ENCODE measurements at regions of chr19 and their contacts with region 1.

Region 1: DNA sequence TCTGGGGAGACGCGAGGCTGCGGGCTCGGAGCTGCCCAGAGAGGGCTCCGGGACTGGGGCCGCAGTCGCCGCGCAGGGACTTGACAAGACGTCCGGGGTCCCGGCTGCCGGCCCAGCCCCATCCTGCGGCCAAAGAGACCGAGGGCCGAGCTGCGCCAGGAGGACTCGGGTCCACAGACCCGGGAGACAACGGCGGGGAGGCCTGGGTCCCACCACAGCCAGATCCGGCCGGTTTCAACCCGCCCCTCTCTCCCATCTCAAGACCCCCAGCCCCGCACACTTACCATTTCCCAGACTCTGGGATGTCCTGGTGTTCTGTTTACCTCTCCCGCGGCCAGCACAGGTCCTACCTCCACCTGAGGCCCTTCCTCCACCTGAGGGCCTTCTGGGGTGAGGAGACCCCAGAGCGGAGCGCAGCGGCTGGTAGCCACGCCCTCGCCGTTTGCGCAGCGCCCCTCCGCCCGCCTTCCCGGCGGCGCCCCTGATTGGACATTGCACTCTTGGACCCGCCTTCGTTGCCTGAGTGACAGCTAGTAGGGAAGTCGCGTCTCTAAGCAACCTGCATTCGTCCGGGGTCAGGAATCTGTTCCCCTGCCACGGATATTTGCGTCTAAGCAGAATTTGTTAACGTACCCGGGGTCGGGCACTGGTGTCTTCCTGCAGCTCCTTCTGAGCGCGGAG is at the start of gene ZNF709:
- DNase-seq: peak; percentile 93
- ATAC-seq: peak; percentile 96
- H3K4me3 ChIP-seq: peak within 1 kb of the TSS; percentile 81 to 98 (median 92)
- H3K4me3 Mint-ChIP-seq: peak within 1 kb of the TSS; percentile 91
- H3K27ac ChIP-seq: peak within 1 kb of the TSS; percentile 69 to 84
- H3K27ac Mint-ChIP-seq: peak within 1 kb of the TSS; percentile 89
- H3K4me1 ChIP-seq: peaks cover 30 to 39% of the 10 kb centered on the region in 2 donors
- H3K4me1 Mint-ChIP-seq: peaks cover 34% of the 10 kb centered on the region
- H3K27me3 ChIP-seq: no peaks in the 10 kb centered on the region
- H3K27me3 Mint-ChIP-seq: no peaks in the 10 kb centered on the region
- CTCF ChIP-seq: no peak
- total RNA-seq, gene ZNF709: 8.4 and 9.3 TPM in 2 replicates

Region 2: GRCh38 chr19:12294249-12295158 is 190.0 kb before region 1 on chr19 and contains the start of gene ZNF44:
- CTCF ChIA-PET with region 1: no interaction called
- POLR2A ChIA-PET with region 1: no interaction called
- intact Hi-C with region 1: loop called (anchors 2 kb)
- DNase-seq: peak; percentile 95
- ATAC-seq: peak; percentile 96
- H3K4me3 ChIP-seq: peak within 1 kb of the TSS; percentile 57 to 96 (median 91)
- H3K4me3 Mint-ChIP-seq: peak within 1 kb of the TSS; percentile 99
- H3K27ac ChIP-seq: peak within 1 kb of the TSS; percentile 82 to 89
- H3K27ac Mint-ChIP-seq: peak within 1 kb of the TSS; percentile 94
- H3K4me1 ChIP-seq: peaks cover 8 to 17% of the 10 kb centered on the region in 2 donors
- H3K4me1 Mint-ChIP-seq: peaks cover 31% of the 10 kb centered on the region
- H3K27me3 ChIP-seq: no peaks in the 10 kb centered on the region
- H3K27me3 Mint-ChIP-seq: no peaks in the 10 kb centered on the region
- CTCF ChIP-seq: no peak
- total RNA-seq, gene ZNF44: 27.8 and 28.0 TPM in 2 replicates

Region 3: DNA sequence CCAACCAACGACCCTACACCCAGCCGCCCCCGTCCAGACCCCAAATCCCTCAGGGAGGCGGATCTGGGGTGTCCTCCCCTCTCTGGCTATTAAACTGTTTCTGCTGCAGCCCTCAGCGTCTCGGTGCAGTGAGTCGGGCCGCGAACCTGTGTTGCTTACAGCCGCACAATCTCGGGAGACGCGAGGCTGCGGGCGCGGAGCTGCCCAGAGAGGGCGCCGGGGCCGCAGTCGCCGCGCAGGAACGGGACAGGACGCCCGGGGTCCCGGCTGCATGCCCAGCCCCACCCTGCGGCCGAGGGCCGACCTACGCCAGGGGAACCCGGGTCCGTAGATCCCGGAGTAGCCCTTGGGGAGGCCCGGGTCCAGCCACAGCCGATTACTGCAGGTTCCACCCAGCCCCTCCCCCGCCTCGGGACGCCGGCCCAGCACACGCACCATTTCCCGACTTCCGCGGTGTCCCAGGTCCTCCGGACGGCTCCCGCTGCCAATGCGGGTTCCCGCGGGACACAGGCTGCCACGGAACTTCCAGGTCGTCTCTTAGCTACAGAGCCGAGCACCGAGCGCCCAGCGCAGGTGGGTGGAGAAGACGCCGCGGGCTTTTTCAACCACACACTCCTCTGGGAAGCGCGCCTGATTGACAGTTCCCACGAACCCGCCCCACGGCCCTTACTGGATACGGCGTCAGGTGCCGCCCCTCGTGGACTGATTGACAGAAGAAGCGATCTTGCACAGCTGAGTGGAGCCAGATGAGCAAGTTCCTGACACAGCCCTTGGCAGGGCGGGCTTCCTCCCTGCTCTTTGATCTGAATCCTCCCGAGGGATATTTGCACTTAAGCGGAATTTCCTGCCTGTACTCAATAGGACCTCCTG is 83.6 kb before region 1 on chr19 and contains the start of gene ZNF799:
- CTCF ChIA-PET with region 1: no interaction called
- POLR2A ChIA-PET with region 1: no interaction called
- intact Hi-C with region 1: loop called (anchors 1 kb)
- DNase-seq: peak; percentile 89
- ATAC-seq: peak; percentile 91
- H3K4me3 ChIP-seq: peak within 1 kb of the TSS; percentile 61 to 93 (median 90)
- H3K4me3 Mint-ChIP-seq: peak within 1 kb of the TSS; percentile 91
- H3K27ac ChIP-seq: peak within 1 kb of the TSS in 1 of 2 donors; percentile 68
- H3K27ac Mint-ChIP-seq: peak within 1 kb of the TSS; percentile 85
- H3K4me1 ChIP-seq: peaks cover 4 to 7% of the 10 kb centered on the region in 2 donors
- H3K4me1 Mint-ChIP-seq: peaks cover 20% of the 10 kb centered on the region
- H3K27me3 ChIP-seq: no peaks in the 10 kb centered on the region
- H3K27me3 Mint-ChIP-seq: no peaks in the 10 kb centered on the region
- CTCF ChIP-seq: no peak
- total RNA-seq, gene ZNF799: 10.5 and 11.1 TPM in 2 replicates

Region 4: GRCh38 chr19:12495002-12495802 is 10.7 kb after region 1 on chr19:
- CTCF ChIA-PET with region 1: interaction called, 6 read pairs
- POLR2A ChIA-PET with region 1: interaction called, 9 read pairs
- intact Hi-C with region 1: loop called (anchors 1 kb)
- DNase-seq: peak; percentile 95
- ATAC-seq: peak; percentile 99
- H3K4me3 ChIP-seq: peak overlapping the region; percentile 68 to 84 (median 76)
- H3K4me3 Mint-ChIP-seq: peak overlapping the region; percentile 92
- H3K27ac ChIP-seq: peak overlapping the region; percentile 82 to 84
- H3K27ac Mint-ChIP-seq: peak overlapping the region; percentile 86
- H3K4me1 ChIP-seq: peaks cover 7 to 11% of the 10 kb centered on the region in 2 donors
- H3K4me1 Mint-ChIP-seq: peaks cover 14% of the 10 kb centered on the region
- H3K27me3 ChIP-seq: no peaks in the 10 kb centered on the region
- H3K27me3 Mint-ChIP-seq: no peaks in the 10 kb centered on the region
- CTCF ChIP-seq: peak; percentile 56

Region 5: DNA sequence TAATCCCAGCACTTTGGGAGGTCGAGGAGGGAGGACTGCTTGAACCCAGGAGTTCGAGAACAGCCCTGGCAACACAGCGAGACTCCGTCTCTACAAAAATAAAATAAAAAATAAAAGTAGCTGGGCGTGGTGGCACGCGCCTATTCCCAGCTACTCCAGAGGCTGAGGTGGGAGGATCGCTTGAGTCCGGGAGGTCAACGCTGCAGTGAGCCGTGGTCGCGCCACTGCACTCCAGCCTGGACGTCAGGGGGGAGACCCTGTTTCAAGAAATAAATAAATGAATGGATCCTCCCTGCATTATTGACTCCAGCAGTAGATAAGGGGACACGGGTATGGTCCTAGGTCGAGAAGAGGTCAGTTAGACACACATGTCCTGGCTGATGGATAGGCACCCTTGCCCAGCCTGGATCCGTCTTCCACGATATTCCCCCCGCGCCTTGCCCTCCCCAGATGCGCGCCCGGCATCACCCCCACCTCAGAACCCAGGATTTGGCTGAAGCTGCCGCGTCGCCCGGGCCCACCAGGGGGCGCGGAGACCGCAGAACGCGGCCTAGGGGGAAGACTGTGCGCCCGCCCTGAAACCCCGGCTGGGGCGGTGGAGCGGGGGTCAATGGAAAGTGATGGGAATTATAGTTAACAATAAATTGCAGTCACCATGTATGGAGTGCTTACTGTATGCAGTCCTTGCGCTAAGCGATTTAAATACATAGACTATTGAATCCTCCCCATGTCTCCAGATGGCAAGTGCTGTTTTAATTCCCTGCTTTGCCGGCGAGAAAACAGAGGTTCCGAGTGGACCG is 292.9 kb after region 1 on chr19:
- CTCF ChIA-PET with region 1: no interaction called
- POLR2A ChIA-PET with region 1: no interaction called
- intact Hi-C with region 1: no loop called
- DNase-seq: peak; percentile 90
- ATAC-seq: peak; percentile 29
- H3K4me3 ChIP-seq: peak overlapping the region; percentile 63 to 89 (median 75)
- H3K4me3 Mint-ChIP-seq: peak overlapping the region; percentile 88
- H3K27ac ChIP-seq: peak overlapping the region; percentile 83 to 86
- H3K27ac Mint-ChIP-seq: peak overlapping the region; percentile 84
- H3K4me1 ChIP-seq: peaks cover 27 to 47% of the 10 kb centered on the region in 2 donors
- H3K4me1 Mint-ChIP-seq: peaks cover 48% of the 10 kb centered on the region
- H3K27me3 ChIP-seq: no peaks in the 10 kb centered on the region
- H3K27me3 Mint-ChIP-seq: no peaks in the 10 kb centered on the region
- CTCF ChIP-seq: peak; percentile 99